Heart right ventricle (tissue), 16 donors: ENCODE measurements at regions of chr20 and their contacts with region 1.

Region 1: GRCh38 chr20:2859330-2860121 is 13.8 kb upstream of the PTPRA start:
- DNase-seq: no peak
- ATAC-seq: peak in 6 of 8 donors; percentile 46 to 66 (median 58)
- H3K4me3 ChIP-seq: no peak overlapping the region
- H3K27ac ChIP-seq: no peak overlapping the region
- H3K4me1 ChIP-seq: peaks cover 0 to 15% (median 6%) of the 10 kb centered on the region in 9 donors
- H3K27me3 ChIP-seq: no peaks in the 10 kb centered on the region
- CTCF ChIP-seq: no peak

Region 2: DNA sequence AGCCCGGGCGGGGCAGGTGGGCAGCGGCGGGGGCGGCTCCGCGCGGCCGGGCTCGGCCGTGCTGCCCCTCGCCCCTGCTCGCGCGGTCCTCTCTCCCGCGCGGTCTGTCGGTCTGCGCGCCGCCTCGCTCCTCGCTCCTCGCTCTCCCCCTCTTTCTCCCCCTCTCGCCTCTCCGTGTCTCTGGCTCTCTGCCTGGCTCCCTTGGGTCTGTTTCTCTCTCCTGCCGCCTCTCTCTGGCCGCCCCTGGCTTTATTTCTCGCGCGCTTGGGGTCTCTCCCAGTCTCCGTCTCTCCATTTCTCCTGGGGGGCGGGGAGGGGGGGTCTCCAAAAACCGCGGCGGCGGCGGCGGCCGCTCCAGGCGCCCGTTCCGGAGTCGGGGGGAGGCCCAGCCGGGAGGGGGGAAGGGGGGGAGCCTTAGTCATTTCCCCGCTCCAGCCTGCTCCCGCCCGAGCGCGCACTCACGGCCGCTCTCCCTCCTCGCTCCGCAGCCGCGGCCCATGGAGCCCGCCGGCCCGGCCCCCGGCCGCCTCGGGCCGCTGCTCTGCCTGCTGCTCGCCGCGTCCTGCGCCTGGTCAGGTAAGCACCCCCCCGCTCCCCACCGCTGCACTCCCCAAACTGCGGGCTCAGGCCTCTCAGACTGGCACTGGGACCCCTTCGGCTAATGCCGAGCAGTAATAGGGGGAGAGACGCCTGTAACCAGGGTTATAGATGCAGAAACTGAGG is 964.4 kb before region 1 on chr20 and contains the start of gene SIRPA:
- intact Hi-C with region 1: no loop called
- DNase-seq: peak; percentile 67 to 69
- ATAC-seq: peak; percentile 48 to 70 (median 64)
- H3K4me3 ChIP-seq: peak within 1 kb of the TSS; percentile 61 to 82 (median 74)
- H3K27ac ChIP-seq: peak within 1 kb of the TSS; percentile 72 to 97 (median 94)
- H3K4me1 ChIP-seq: peaks cover 3 to 63% (median 60%) of the 10 kb centered on the region in 9 donors
- H3K27me3 ChIP-seq: peaks cover 0 to 16% (median 0%) of the 10 kb centered on the region in 7 donors
- CTCF ChIP-seq: no peak
- total RNA-seq, gene SIRPA: 16.7 to 45.8 (median 24.8) TPM

Region 3: GRCh38 chr20:2688041-2688591 is 171.4 kb before region 1 on chr20:
- intact Hi-C with region 1: loop called in 1 of 10 experiments (anchors 10 kb)
- DNase-seq: peak; percentile 29 to 52
- ATAC-seq: peak in 3 of 8 donors; percentile 40 to 56 (median 46)
- H3K4me3 ChIP-seq: no peak overlapping the region
- H3K27ac ChIP-seq: no peak overlapping the region
- H3K4me1 ChIP-seq: peaks cover 0 to 18% (median 6%) of the 10 kb centered on the region in 9 donors
- H3K27me3 ChIP-seq: peaks cover 0 to 57% (median 10%) of the 10 kb centered on the region in 7 donors
- CTCF ChIP-seq: peak; percentile 25 to 74 (median 62)

Region 4: GRCh38 chr20:2800521-2801285 is 58.8 kb before region 1 on chr20 and contains the start of gene CPXM1:
- intact Hi-C with region 1: no loop called
- DNase-seq: no peak
- ATAC-seq: peak in 2 of 8 donors; percentile 26 to 34
- H3K4me3 ChIP-seq: peak within 1 kb of the TSS in 9 of 10 donors; percentile 16 to 54 (median 34)
- H3K27ac ChIP-seq: peak within 1 kb of the TSS in 1 of 10 donors; percentile 47
- H3K4me1 ChIP-seq: peaks cover 0 to 37% (median 12%) of the 10 kb centered on the region in 9 donors
- H3K27me3 ChIP-seq: peaks cover 14 to 97% (median 86%) of the 10 kb centered on the region in 7 donors
- CTCF ChIP-seq: no peak
- total RNA-seq, gene CPXM1: 0.48 to 4.5 (median 1.4) TPM in 9 of 10 donors, not detected in the other

Region 5: DNA sequence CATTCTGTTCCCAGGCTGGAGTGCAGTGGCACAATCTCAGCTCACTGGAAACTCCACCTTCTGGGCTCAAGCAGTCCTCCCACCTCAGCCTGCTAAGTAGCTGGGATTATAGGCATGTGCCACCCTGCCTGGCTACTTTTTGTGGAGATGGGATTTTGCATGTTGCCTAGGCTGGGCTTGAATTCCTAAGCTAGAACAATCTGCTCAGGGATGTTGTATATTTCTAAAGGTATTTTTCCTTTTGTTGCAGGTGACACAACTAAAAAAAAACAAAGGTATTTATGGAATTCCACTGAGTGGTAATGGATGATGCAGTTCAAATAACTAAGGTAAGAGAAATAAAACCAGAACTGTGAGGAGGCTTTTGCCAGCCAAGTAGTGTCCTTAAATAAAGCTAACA is 63.4 kb after region 1 on chr20:
- intact Hi-C with region 1: no loop called
- DNase-seq: no peak
- ATAC-seq: no peak
- H3K4me3 ChIP-seq: no peak overlapping the region
- H3K27ac ChIP-seq: no peak overlapping the region
- H3K4me1 ChIP-seq: peaks cover 0 to 14% (median 5%) of the 10 kb centered on the region in 9 donors
- H3K27me3 ChIP-seq: no peaks in the 10 kb centered on the region
- CTCF ChIP-seq: no peak